ENCODE measurements at regions of chr19 and their contacts with region 1.

Region 1: DNA sequence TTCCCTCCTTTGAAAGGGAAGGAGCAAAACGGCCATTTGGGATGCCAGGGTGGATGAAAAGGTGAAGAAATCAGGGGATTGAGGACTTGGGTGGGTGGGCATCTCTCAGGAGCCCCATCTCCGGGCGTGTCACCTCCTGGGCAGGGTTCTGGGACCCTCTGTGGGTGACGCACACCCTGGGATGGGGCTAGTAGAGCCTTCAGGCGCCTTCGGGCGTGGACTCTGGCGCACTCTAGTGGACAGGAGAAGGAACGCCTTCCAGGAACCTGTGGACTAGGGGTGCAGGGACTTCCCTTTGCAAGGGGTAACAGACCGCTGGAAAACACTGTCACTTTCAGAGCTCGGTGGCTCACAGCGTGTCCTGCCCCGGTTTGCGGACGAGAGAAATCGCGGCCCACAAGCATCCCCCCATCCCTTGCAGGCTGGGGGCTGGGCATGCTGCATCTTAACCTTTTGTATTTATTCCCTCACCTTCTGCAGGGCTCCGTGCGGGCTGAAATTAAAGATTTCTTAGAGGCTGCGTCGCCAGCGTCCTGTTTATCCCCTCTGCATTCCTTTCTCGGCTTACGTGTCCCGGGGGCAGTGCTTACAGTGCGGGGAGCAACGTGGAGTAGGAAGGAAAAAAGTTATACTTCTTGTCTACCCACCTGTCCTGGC is 15.2 kb upstream of the S1PR4 start:
- DNase-seq: peak; percentile 53
- H3K4me3 ChIP-seq: no peak overlapping the region
- H3K27ac ChIP-seq: no peak overlapping the region
- H3K4me1 ChIP-seq: peaks cover 5% of the 10 kb centered on the region
- H3K27me3 ChIP-seq: no peaks in the 10 kb centered on the region
- CTCF ChIP-seq: peak; percentile 99

Region 2: GRCh38 chr19:2950286-2951124 is 212.9 kb before region 1 on chr19:
- intact Hi-C with region 1: loop called (anchors 10 kb)
- DNase-seq: peak; percentile 100
- H3K4me3 ChIP-seq: peak overlapping the region; percentile 90
- H3K27ac ChIP-seq: peak overlapping the region; percentile 96
- H3K4me1 ChIP-seq: peaks cover 25% of the 10 kb centered on the region
- H3K27me3 ChIP-seq: no peaks in the 10 kb centered on the region
- CTCF ChIP-seq: no peak

Region 3: DNA sequence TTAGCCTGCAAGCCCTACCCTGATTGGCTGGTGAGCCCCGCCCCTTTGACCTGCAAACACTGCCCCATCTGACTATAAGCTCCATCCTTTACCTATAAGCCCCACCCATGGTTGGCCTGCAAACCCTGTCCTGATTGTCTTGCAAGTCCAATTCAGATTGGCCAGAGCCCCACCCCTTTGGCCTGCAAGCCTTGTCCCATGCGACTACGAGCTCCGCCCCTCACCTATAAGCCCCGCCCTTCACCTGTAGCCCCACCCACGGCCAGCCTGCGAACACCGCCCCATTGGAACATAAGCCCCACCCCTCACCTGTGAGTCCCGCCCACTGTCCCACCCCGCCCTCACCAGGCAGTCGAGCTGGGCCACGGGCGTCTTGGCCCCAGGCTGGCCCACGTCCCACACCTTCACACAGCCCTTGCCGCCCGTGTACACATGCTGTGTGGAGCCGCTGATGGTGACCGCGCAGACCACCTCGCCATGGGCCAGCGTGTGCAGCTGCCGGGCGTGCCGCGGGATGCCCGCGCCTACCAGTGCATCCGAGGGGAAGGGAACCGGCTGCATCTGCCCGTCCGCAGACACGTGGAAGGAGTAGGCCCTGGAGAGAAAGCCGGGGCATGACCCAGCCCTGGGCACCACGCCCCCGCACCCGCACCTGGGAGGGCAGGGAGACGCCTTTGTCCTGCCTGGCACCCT is 157.1 kb before region 1 on chr19:
- intact Hi-C with region 1: no loop called
- DNase-seq: no peak
- H3K4me3 ChIP-seq: no peak overlapping the region
- H3K27ac ChIP-seq: no peak overlapping the region
- H3K4me1 ChIP-seq: no peaks in the 10 kb centered on the region
- H3K27me3 ChIP-seq: no peaks in the 10 kb centered on the region
- CTCF ChIP-seq: no peak

Measured in left ventricle myocardium inferior (tissue), 1 donor.